ENCODE measurements at regions of chr18 and their contacts with region 1.

Region 1: GRCh38 chr18:59697236-59697932 is at the start of gene CCBE1:
- DNase-seq: no peak
- H3K4me3 ChIP-seq: peak within 1 kb of the TSS; percentile 89
- H3K27me3 ChIP-seq: no peaks in the 10 kb centered on the region
- CTCF ChIP-seq: peak; percentile 99
- polyA plus RNA-seq, gene CCBE1: 35.4 and 51.2 TPM in 2 replicates

Region 2: DNA sequence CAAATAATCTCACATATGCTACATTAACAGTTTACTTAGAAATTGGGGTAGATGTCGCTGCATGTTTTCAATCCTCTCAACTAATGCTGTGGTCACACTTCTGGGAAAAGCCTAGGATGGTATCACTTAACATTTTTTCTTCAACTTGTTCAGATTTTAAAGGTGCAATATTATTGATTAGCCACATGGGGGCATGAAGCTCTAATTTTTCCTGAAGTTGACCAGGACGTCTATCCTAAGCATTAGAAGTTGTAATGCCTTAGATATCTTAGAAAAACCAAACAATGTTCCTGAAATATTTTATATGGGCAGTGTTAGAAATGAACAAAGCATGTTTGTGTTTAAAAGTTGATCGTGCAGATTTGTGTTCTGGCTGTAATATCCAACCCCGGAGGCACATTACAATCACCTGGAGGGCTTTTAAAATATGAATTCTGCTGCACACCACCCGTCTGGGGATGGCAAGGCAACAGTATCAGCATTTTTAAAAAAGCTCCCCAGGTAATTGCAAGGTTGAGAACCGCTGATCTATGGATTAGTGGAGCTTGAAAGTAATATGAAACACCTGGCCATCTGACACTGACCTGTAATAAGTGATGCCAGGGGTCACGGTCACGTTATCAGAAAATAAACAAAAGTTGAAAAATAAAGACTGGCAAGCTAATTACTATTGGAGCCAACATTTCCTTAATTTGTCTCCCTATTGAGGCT is 237.9 kb before region 1 on chr18:
- CTCF ChIA-PET with region 1: interaction called, 33 read pairs
- POLR2A ChIA-PET with region 1: no interaction called
- DNase-seq: no peak
- H3K4me3 ChIP-seq: no peak overlapping the region
- H3K27me3 ChIP-seq: no peaks in the 10 kb centered on the region
- CTCF ChIP-seq: peak; percentile 54

Region 3: GRCh38 chr18:59631583-59632181 is 65.7 kb before region 1 on chr18:
- CTCF ChIA-PET with region 1: interaction called, 38 read pairs
- POLR2A ChIA-PET with region 1: no interaction called
- DNase-seq: no peak
- H3K4me3 ChIP-seq: no peak overlapping the region
- H3K27me3 ChIP-seq: no peaks in the 10 kb centered on the region
- CTCF ChIP-seq: peak; percentile 84

Region 4: GRCh38 chr18:59685501-59685900 is 11.9 kb before region 1 on chr18:
- CTCF ChIA-PET with region 1: interaction called, 42 read pairs
- POLR2A ChIA-PET with region 1: no interaction called
- DNase-seq: no peak
- H3K4me3 ChIP-seq: no peak overlapping the region
- H3K27me3 ChIP-seq: no peaks in the 10 kb centered on the region
- CTCF ChIP-seq: no peak

Region 5: GRCh38 chr18:59752666-59753065 is 55.3 kb after region 1 on chr18:
- CTCF ChIA-PET with region 1: interaction called, 22 read pairs
- POLR2A ChIA-PET with region 1: no interaction called
- DNase-seq: no peak
- H3K4me3 ChIP-seq: no peak overlapping the region
- H3K27me3 ChIP-seq: no peaks in the 10 kb centered on the region
- CTCF ChIP-seq: no peak

Region 6: DNA sequence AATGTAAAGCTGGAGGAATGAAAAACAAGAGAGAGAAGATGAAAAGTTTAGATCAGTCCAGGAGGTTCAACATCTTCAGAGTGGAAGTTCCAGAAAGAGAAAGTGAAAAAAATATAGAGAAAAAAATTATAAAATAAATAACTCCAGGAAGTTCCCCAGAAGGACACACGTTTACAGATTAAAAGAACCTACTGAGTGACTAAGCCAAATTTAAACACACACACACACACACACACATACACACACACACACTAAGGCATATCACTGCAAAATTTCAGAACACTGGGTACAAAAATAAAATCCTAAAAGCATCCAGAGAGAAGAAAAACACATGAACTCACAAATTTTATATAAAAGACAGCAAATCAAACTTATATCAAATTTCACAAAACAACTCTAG is 116.6 kb after region 1 on chr18:
- CTCF ChIA-PET with region 1: interaction called, 10 read pairs
- POLR2A ChIA-PET with region 1: no interaction called
- DNase-seq: no peak
- H3K4me3 ChIP-seq: no peak overlapping the region
- H3K27me3 ChIP-seq: no peaks in the 10 kb centered on the region
- CTCF ChIP-seq: no peak